Lower leg skin (tissue), 4 donors: ENCODE measurements at regions of chr4 and their contacts with region 1.

Region 1: DNA sequence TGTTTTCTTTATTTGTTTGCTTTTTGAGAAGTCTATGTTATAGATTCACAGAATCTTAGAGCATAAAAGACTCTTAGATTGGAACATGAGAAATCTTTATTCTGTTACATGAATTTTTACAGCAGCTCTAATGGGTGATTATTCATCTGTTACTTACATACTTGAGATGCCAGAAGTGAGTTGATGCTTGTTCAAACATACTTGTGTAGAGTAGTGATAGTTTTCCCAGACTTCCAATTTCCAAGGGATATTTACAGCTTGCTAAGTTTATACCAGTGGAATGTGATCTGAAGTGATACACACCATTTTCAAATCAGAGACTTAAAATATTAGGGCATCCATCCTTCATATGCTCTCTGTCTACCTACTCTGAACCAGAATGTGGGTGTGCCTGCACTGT is 252.9 kb upstream of the SMIM31 start:
- DNase-seq: no peak
- H3K4me3 ChIP-seq: no peak overlapping the region
- CTCF ChIP-seq: no peak
- POLR2A ChIP-seq: no peak

Region 2: GRCh38 chr4:162707962-162708361 is 1793.1 kb before region 1 on chr4:
- intact Hi-C with region 1: loop called (anchors 5 kb)
- DNase-seq: no peak
- H3K4me3 ChIP-seq: no peak overlapping the region
- CTCF ChIP-seq: no peak
- POLR2A ChIP-seq: no peak

Region 3: DNA sequence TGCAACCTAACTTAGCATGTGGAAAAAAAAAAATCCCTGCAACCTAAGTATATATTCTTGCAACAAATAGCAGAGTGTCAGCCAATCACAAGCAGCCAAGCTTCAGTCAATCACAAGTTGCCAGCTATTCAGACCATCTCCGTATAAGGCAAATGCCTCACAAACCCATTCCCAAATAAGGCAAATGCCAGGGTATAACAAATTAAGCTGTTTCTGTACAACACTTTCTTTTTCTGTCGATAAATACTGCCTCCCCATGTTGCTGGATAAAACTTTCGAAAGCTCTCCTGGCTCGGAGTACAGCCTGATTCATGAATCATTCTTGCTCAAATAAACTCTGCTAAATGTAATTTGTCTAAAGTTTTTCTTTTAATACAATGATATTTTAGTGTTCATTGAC is 207.9 kb before region 1 on chr4:
- intact Hi-C with region 1: no loop called
- DNase-seq: no peak
- H3K4me3 ChIP-seq: no peak overlapping the region
- CTCF ChIP-seq: no peak
- POLR2A ChIP-seq: no peak